BJ (cell line): ENCODE measurements at regions of chr3 and their contacts with region 1.

Region 1: GRCh38 chr3:58824285-58824684 is 157.7 kb upstream of the FAM3D start:
- DNase-seq: no peak
- H3K4me3 ChIP-seq: no peak overlapping the region
- H3K27me3 ChIP-seq: no peaks in the 10 kb centered on the region
- CTCF ChIP-seq: peak; percentile 84

Region 2: GRCh38 chr3:58804914-58805313 is 19.4 kb before region 1 on chr3:
- CTCF ChIA-PET with region 1: interaction called, 18 read pairs
- POLR2A ChIA-PET with region 1: no interaction called
- DNase-seq: no peak
- H3K4me3 ChIP-seq: no peak overlapping the region
- H3K27me3 ChIP-seq: no peaks in the 10 kb centered on the region
- CTCF ChIP-seq: no peak

Region 3: GRCh38 chr3:58837856-58838255 is 13.6 kb after region 1 on chr3:
- CTCF ChIA-PET with region 1: interaction called, 20 read pairs
- POLR2A ChIA-PET with region 1: no interaction called
- DNase-seq: no peak
- H3K4me3 ChIP-seq: no peak overlapping the region
- H3K27me3 ChIP-seq: no peaks in the 10 kb centered on the region
- CTCF ChIP-seq: no peak

Region 4: GRCh38 chr3:58994746-58995330 is 170.6 kb after region 1 on chr3:
- CTCF ChIA-PET with region 1: interaction called, 10 read pairs
- POLR2A ChIA-PET with region 1: no interaction called
- DNase-seq: no peak
- H3K4me3 ChIP-seq: no peak overlapping the region
- H3K27me3 ChIP-seq: no peaks in the 10 kb centered on the region
- CTCF ChIP-seq: peak; percentile 88

Region 5: DNA sequence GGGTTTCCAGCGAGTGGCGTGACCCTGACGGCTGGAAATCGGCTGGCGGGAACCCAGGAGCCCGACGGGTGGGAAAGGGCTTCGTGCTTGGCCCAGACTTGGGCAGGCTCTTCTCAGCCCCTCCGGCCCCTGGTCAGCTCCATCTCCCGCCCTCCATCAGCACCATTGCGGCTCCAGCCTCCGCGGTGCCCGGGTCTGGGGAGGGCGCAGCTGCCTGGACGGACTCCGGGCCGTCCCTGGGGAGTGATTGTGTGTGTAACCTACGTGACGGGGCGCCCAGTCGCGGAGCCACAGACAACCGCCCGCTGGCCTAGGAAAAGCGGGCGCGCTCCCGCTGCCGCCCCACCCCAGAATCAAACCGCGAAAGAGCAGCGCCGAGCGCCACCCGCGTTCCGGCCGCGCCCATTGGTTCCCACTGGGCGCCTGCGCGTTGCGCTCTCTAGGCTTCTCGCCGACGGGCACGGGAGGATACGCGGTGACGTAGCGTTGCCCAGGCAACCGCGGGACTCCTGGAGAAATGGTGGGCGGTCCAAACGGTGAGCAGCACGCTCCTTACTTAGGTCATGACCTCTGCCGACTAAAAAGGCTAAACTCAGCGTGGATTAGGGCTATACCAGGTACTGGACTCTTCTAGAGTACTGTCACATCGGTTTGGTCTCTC is 225.5 kb after region 1 on chr3 and contains the start of gene CFAP20DC:
- CTCF ChIA-PET with region 1: interaction called, 40 read pairs
- POLR2A ChIA-PET with region 1: no interaction called
- DNase-seq: peak; percentile 62
- H3K4me3 ChIP-seq: peak within 1 kb of the TSS; percentile 58
- H3K27me3 ChIP-seq: no peaks in the 10 kb centered on the region
- CTCF ChIP-seq: no peak
- polyA plus RNA-seq, gene CFAP20DC: 0.81 and 2.2 TPM in 2 replicates